Naive thymus-derived CD4-positive, alpha-beta T cell (primary cell): ENCODE measurements at regions of chr1 and their contacts with region 1.

Region 1: GRCh38 chr1:6475381-6476133 is 9.6 kb upstream of the TNFRSF25 start:
- DNase-seq: peak; percentile 69 to 90 (median 77)
- ATAC-seq: peak; percentile 97
- H3K4me3 ChIP-seq: no peak overlapping the region
- H3K4me3 Mint-ChIP-seq: no peak overlapping the region
- H3K27ac ChIP-seq: no peak overlapping the region
- H3K27ac Mint-ChIP-seq: peak overlapping the region in 1 of 9 donors; percentile 22
- H3K4me1 ChIP-seq: peaks cover 0 to 6% of the 10 kb centered on the region in 2 donors
- H3K4me1 Mint-ChIP-seq: peaks cover 0 to 7% (median 2%) of the 10 kb centered on the region in 7 donors
- H3K27me3 ChIP-seq: no peaks in the 10 kb centered on the region
- H3K27me3 Mint-ChIP-seq: peaks cover 0 to 3% (median 0%) of the 10 kb centered on the region in 5 donors

Region 2: GRCh38 chr1:6343506-6344405 is 131.8 kb before region 1 on chr1:
- CTCF ChIA-PET with region 1: no interaction called
- POLR2A ChIA-PET with region 1: no interaction called
- intact Hi-C with region 1: loop called in 1 of 2 experiments (anchors 5 kb)
- DNase-seq: peak; percentile 19 to 67 (median 49)
- ATAC-seq: peak; percentile 73
- H3K4me3 ChIP-seq: no peak overlapping the region
- H3K4me3 Mint-ChIP-seq: no peak overlapping the region
- H3K27ac ChIP-seq: no peak overlapping the region
- H3K27ac Mint-ChIP-seq: peak overlapping the region in 1 of 9 donors; percentile 25
- H3K4me1 ChIP-seq: peaks cover 12 to 13% of the 10 kb centered on the region in 2 donors
- H3K4me1 Mint-ChIP-seq: peaks cover 9 to 24% (median 11%) of the 10 kb centered on the region in 7 donors
- H3K27me3 ChIP-seq: no peaks in the 10 kb centered on the region
- H3K27me3 Mint-ChIP-seq: no peaks in the 10 kb centered on the region

Region 3: GRCh38 chr1:6423321-6423999 is 52.1 kb before region 1 on chr1:
- CTCF ChIA-PET with region 1: interaction called, 5 read pairs
- POLR2A ChIA-PET with region 1: no interaction called
- intact Hi-C with region 1: loop called (anchors 1 kb)
- DNase-seq: peak; percentile 45 to 75 (median 66)
- ATAC-seq: peak; percentile 84
- H3K4me3 ChIP-seq: peak overlapping the region; percentile 15
- H3K4me3 Mint-ChIP-seq: peak overlapping the region; percentile 54 to 83 (median 72)
- H3K27ac ChIP-seq: no peak overlapping the region
- H3K27ac Mint-ChIP-seq: no peak overlapping the region
- H3K4me1 ChIP-seq: peaks cover 13 to 31% of the 10 kb centered on the region in 2 donors
- H3K4me1 Mint-ChIP-seq: peaks cover 0 to 14% (median 11%) of the 10 kb centered on the region in 7 donors
- H3K27me3 ChIP-seq: peaks cover 0 to 8% of the 10 kb centered on the region in 2 donors
- H3K27me3 Mint-ChIP-seq: peaks cover 18 to 60% (median 26%) of the 10 kb centered on the region in 5 donors

Region 4: DNA sequence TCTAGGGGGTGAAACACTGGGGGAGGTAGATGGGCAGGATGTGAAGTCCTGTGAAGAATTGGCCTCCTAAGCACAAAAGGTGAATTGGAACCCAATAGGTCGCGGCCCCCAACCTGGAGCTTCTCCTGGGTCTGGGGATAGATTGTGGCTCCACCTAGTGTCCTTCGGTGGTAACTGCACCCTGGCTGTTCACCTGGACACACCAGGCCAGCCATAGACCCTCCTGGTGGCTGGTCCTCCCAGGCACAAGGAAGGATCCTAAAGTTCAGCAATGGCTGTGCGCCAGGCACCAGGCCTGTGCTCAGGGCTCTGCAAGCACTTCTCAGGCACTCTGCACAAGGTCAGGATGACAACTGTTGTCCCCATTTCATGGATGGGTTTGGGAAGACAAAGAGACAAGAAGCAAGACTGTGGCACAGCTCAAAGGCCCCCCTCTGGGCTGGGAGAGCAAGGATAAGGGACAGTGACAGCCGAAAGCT is 37.5 kb before region 1 on chr1:
- CTCF ChIA-PET with region 1: interaction called, 8 read pairs
- POLR2A ChIA-PET with region 1: interaction called, 3 read pairs
- intact Hi-C with region 1: loop called in 1 of 2 experiments (anchors 5 kb)
- DNase-seq: peak; percentile 55 to 79 (median 66)
- ATAC-seq: peak; percentile 74
- H3K4me3 ChIP-seq: no peak overlapping the region
- H3K4me3 Mint-ChIP-seq: peak overlapping the region in 4 of 10 donors; percentile 4 to 58 (median 22)
- H3K27ac ChIP-seq: no peak overlapping the region
- H3K27ac Mint-ChIP-seq: peak overlapping the region in 3 of 9 donors; percentile 38 to 74 (median 67)
- H3K4me1 ChIP-seq: no peaks in the 10 kb centered on the region
- H3K4me1 Mint-ChIP-seq: peaks cover 0 to 14% (median 9%) of the 10 kb centered on the region in 7 donors
- H3K27me3 ChIP-seq: peaks cover 0 to 9% of the 10 kb centered on the region in 2 donors
- H3K27me3 Mint-ChIP-seq: peaks cover 18 to 48% (median 20%) of the 10 kb centered on the region in 5 donors

Region 5: DNA sequence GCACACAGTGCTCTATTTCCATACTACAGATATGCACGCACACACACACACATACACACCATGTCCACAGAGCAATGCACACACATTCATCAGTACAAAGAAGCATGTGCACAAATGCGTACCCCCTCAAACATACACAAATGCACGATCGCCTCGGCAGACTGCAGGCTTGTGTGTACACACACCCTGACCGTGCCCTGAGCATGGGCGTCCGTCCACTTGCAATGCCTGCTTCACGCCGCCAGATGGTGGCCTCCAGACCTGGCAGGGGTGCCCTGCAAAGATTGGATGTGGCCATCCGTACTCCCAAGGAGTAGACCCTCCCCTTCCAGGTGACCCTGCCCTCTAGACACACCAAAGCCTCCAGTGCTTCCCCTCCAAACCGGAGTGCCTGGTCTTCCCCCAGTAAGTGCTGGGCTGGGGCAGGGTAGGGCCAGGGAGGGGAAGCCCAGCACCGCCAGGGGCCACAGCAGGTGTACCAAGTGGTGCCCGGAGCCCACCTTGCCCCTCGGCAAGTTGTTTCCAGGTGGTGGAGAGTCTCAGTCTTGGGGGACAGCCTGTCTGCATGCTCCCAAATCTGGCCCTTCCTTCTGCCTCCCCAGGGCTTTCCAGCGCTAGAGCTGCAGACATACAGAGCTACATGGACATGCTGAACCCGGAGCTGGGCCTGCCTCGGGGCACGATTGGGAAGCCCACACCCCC is 30.3 kb before region 1 on chr1:
- CTCF ChIA-PET with region 1: interaction called, 19 read pairs
- POLR2A ChIA-PET with region 1: interaction called, 3 read pairs
- intact Hi-C with region 1: loop called (anchors 1 to 2 kb)
- DNase-seq: peak in 3 of 9 donors; percentile 36 to 44 (median 43)
- ATAC-seq: peak; percentile 33
- H3K4me3 ChIP-seq: no peak overlapping the region
- H3K4me3 Mint-ChIP-seq: peak overlapping the region in 3 of 10 donors; percentile 0 to 64 (median 0)
- H3K27ac ChIP-seq: no peak overlapping the region
- H3K27ac Mint-ChIP-seq: peak overlapping the region in 3 of 9 donors; percentile 1 to 53 (median 2)
- H3K4me1 ChIP-seq: peaks cover 4 to 19% of the 10 kb centered on the region in 2 donors
- H3K4me1 Mint-ChIP-seq: peaks cover 13 to 29% (median 17%) of the 10 kb centered on the region in 7 donors
- H3K27me3 ChIP-seq: peaks cover 4 to 18% of the 10 kb centered on the region in 2 donors
- H3K27me3 Mint-ChIP-seq: peaks cover 19 to 61% (median 30%) of the 10 kb centered on the region in 5 donors

Region 6: GRCh38 chr1:6454856-6455751 is 20.5 kb before region 1 on chr1:
- CTCF ChIA-PET with region 1: interaction called, 19 read pairs
- POLR2A ChIA-PET with region 1: interaction called, 19 read pairs
- intact Hi-C with region 1: loop called in 1 of 2 experiments (anchors 1 kb)
- DNase-seq: peak in 3 of 9 donors; percentile 37 to 40 (median 39)
- ATAC-seq: peak; percentile 57
- H3K4me3 ChIP-seq: no peak overlapping the region
- H3K4me3 Mint-ChIP-seq: peak overlapping the region in 6 of 10 donors; percentile 17 to 67 (median 37)
- H3K27ac ChIP-seq: no peak overlapping the region
- H3K27ac Mint-ChIP-seq: no peak overlapping the region
- H3K4me1 ChIP-seq: peaks cover 0 to 7% of the 10 kb centered on the region in 2 donors
- H3K4me1 Mint-ChIP-seq: peaks cover 15 to 30% (median 28%) of the 10 kb centered on the region in 7 donors
- H3K27me3 ChIP-seq: peaks cover 0 to 3% of the 10 kb centered on the region in 2 donors
- H3K27me3 Mint-ChIP-seq: peaks cover 18 to 54% (median 27%) of the 10 kb centered on the region in 5 donors

Region 7: DNA sequence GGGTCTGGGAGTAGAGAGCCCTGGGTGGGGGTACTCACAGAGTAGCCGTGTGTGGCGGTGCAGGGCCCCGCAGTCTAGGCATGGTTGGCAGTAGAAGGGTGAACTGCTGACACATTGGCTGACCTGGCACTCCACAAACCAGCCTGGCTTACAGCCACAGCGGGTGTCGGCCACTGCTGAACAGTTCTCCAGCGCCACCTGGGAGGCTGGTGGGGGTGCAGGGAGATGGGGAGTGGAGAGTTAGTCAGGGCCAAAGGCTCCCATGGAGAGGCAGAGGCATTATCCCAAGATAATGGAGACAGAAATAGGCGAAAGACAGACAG is 11.1 kb before region 1 on chr1:
- CTCF ChIA-PET with region 1: interaction called, 5 read pairs
- POLR2A ChIA-PET with region 1: interaction called, 19 read pairs
- intact Hi-C with region 1: loop called (anchors 1 kb)
- DNase-seq: no peak
- ATAC-seq: no peak
- H3K4me3 ChIP-seq: peak overlapping the region; percentile 89
- H3K4me3 Mint-ChIP-seq: peak overlapping the region; percentile 89 to 98 (median 92)
- H3K27ac ChIP-seq: peak overlapping the region; percentile 94
- H3K27ac Mint-ChIP-seq: peak overlapping the region; percentile 90 to 99 (median 95)
- H3K4me1 ChIP-seq: peaks cover 31 to 53% of the 10 kb centered on the region in 2 donors
- H3K4me1 Mint-ChIP-seq: peaks cover 23 to 55% (median 49%) of the 10 kb centered on the region in 7 donors
- H3K27me3 ChIP-seq: no peaks in the 10 kb centered on the region
- H3K27me3 Mint-ChIP-seq: peaks cover 0 to 3% (median 0%) of the 10 kb centered on the region in 5 donors